ENCODE measurements at regions of chr17 and their contacts with region 1.

Region 1: DNA sequence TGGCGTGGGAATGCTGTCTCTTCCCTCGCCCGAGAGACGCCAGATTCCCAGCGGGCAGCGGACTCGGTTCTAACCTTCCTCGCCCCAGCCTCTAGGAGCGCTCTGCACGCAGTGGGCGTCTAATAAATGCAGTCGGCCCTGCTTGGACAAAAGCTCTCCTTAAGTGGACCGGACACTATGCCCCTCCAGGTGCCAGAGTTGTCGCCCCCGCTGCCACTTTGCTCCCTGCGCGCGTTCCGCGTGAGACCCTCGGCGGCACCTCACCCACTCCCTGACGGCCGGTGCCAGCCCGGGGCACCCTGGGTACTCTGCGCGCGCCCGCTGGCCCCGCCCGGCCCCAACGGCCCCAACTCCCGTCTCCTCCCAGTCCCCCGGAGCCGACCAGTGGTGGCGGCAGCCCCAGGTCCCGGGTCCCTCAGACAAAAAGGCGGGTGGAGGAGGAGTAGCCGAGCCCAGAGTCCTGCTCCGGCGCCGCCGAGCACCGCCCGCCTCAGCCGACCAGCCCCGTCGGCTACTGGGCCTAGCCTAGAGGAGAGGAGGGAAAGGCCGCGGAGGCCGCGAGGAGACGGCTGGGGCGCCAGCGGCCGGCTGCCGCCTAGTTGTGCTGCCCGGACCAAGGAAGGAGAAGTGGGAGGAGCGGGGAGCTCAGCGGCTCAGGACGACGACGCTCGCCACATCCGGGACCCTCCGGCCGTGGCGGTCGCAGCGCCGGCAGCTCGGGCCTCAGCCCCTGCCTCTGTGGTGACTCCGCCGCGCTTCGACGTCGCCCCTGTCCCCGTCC is 123.0 kb downstream of the GOSR1 start:
- DNase-seq: peak; percentile 38
- ATAC-seq: peak; percentile 95
- H3K4me3 ChIP-seq: peak overlapping the region; percentile 98
- H3K27ac ChIP-seq: peak overlapping the region; percentile 81
- H3K4me1 ChIP-seq: no peaks in the 10 kb centered on the region; the same call in 1 of the 2 replicates
- H3K27me3 ChIP-seq: no peaks in the 10 kb centered on the region
- CTCF ChIP-seq: peak; percentile 47 to 66 (median 49)
- EP300 ChIP-seq: no peak
- POLR2A ChIP-seq: peak; percentile 92
- RAD21 ChIP-seq: no peak

Region 2: DNA sequence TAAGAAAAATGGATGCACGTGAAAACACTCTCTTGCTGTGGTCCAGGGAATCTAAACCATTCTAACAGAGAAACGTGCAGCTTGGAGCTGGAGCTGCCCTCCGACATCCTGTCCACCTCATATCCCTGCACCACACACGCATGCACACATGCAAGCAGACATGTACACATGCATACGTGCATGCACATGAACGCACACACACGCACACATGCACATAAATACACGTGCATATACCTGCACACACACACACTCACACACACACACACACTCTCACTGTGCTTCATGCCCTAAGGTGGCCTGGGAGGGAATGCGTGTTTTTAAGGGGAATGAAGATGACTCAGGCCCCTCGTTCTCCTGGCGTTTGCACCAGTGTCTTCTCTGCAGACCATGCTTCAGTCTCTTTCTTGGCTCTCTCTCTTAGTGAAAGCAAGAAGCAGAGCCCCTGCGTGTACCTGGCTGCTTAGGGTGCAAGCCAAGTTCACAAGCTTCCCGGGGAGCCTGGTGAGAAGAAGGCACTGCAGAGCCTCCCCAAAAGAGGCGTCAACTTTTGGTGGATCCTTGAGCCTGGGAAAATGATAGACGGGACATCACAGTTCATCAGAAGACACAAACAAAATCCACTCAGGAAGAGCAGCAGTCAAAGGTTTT is 50.3 kb before region 1 on chr17:
- CTCF ChIA-PET with region 1: no interaction called
- POLR2A ChIA-PET with region 1: no interaction called
- RAD21 ChIA-PET with region 1: no interaction called
- SMC1A ChIA-PET with region 1: no interaction called
- in situ Hi-C with region 1: no loop called
- intact Hi-C with region 1: loop called (anchors 5 kb)
- DNase-seq: no peak
- ATAC-seq: no peak
- H3K4me3 ChIP-seq: no peak overlapping the region
- H3K27ac ChIP-seq: no peak overlapping the region
- H3K4me1 ChIP-seq: peaks cover 10% of the 10 kb centered on the region
- H3K27me3 ChIP-seq: no peaks in the 10 kb centered on the region; a peak in 1 of 4 replicates
- CTCF ChIP-seq: no peak
- EP300 ChIP-seq: no peak
- POLR2A ChIP-seq: no peak
- RAD21 ChIP-seq: no peak

Region 3: GRCh38 chr17:30716461-30717300 is 116.4 kb after region 1 on chr17:
- CTCF ChIA-PET with region 1: no interaction called
- POLR2A ChIA-PET with region 1: no interaction called
- RAD21 ChIA-PET with region 1: interaction called, 3 read pairs
- SMC1A ChIA-PET with region 1: no interaction called
- in situ Hi-C with region 1: no loop called
- intact Hi-C with region 1: loop called (anchors 5 kb)
- DNase-seq: no peak
- ATAC-seq: peak; percentile 12; the same call in 1 of the 3 replicates
- H3K4me3 ChIP-seq: no peak overlapping the region
- H3K27ac ChIP-seq: no peak overlapping the region
- H3K4me1 ChIP-seq: no peaks in the 10 kb centered on the region; the same call in 1 of the 2 replicates
- H3K27me3 ChIP-seq: no peaks in the 10 kb centered on the region
- CTCF ChIP-seq: peak; percentile 11 to 38 (median 28); a peak in 4 of 6 replicates
- EP300 ChIP-seq: no peak
- POLR2A ChIP-seq: no peak
- RAD21 ChIP-seq: peak; percentile 26; the same call in 1 of the 2 replicates

Measured in GM12878 (cell line).